Motor neuron (in vitro differentiated cells): ENCODE measurements at regions of chr16 and their contacts with region 1.

Region 1: GRCh38 chr16:20849587-20850390 is 43.5 kb downstream of the REXO5 start:
- ATAC-seq: peak; percentile 16 to 81 (median 51)
- H3K4me3 ChIP-seq: no peak overlapping the region
- H3K27ac ChIP-seq: no peak overlapping the region
- H3K4me1 ChIP-seq: peaks cover 0 to 3% of the 10 kb centered on the region in 2 donors

Region 2: GRCh38 chr16:20484726-20485125 is 365.1 kb before region 1 on chr16:
- in situ Hi-C with region 1: no loop called
- ATAC-seq: no peak
- H3K4me3 ChIP-seq: no peak overlapping the region
- H3K27ac ChIP-seq: no peak overlapping the region
- H3K4me1 ChIP-seq: no peaks in the 10 kb centered on the region

Region 3: GRCh38 chr16:21083729-21084268 is 234.0 kb after region 1 on chr16:
- in situ Hi-C with region 1: loop called in 5 of 9 experiments (anchors 10 to 25 kb)
- ATAC-seq: peak; percentile 63 to 98 (median 81)
- H3K4me3 ChIP-seq: no peak overlapping the region
- H3K27ac ChIP-seq: no peak overlapping the region
- H3K4me1 ChIP-seq: no peaks in the 10 kb centered on the region

Region 4: DNA sequence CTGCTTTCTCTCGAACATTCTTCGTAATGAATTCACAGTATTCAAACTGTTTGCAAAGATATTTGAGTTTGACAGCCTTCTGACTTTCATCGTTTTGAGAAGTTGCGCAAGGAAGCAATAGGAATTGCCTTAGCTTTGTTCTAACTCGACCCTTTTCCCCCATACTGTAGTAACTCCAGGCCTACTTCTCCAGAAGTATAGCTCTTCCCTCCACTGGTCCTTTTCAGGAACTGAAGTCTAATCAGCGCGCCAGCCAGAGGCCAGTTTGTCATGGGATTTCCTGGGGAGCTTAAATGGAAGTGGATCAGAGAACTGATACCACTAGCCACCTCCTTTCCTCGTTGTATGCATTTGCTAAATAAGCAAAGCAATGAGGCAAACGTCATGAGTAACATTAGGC is 1496.7 kb after region 1 on chr16:
- in situ Hi-C with region 1: loop called in 1 of 9 experiments (anchors 25 kb)
- ATAC-seq: no peak
- H3K4me3 ChIP-seq: no peak overlapping the region
- H3K27ac ChIP-seq: no peak overlapping the region
- H3K4me1 ChIP-seq: no peaks in the 10 kb centered on the region